ENCODE measurements at regions of chr1 and their contacts with region 1.

Region 1: DNA sequence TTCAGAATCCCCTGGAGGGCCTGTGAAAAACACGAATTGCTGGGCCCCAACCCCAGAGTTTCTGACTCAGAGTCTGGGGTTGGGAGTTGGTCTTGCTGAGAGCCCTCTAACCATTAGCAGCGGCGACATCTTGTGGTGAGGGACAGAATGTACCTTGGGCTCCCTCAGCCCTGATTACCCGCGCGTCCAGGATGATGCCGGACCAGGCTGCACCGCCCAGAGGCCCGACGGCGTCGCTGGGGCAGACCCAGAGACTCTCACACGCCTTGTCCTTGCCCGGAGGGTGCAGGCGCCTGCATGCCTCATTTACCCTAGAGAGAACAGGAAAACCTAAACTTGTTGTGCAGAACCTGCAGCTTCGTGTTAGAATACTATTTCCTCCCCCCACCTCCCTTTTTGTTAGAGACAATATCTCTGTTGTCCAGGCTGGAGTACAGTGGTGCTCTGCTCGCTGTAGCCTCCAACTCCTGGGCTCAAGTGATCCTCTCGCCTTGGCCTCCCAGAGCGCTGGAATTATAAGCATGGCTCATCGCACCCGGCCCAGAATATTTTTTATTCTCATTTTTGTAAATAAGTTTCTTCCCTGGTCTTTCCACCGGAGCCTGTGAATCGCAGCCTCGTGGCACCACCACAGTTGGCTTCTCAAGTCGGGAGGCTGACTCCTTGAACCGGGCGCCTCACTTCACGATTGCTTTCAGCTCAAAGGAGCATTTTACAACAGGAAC is 22.2 kb upstream of the RD3 start:
- DNase-seq: peak; percentile 26 to 79 (median 67)
- ATAC-seq: peak; percentile 65
- H3K4me3 ChIP-seq: no peak overlapping the region
- H3K4me3 Mint-ChIP-seq: peak overlapping the region; percentile 69
- H3K27ac ChIP-seq: no peak overlapping the region
- H3K27ac Mint-ChIP-seq: no peak overlapping the region
- H3K4me1 ChIP-seq: peaks cover 20% of the 10 kb centered on the region
- H3K4me1 Mint-ChIP-seq: peaks cover 17% of the 10 kb centered on the region
- H3K27me3 ChIP-seq: peaks cover 0 to 2% of the 10 kb centered on the region in 2 experiments
- H3K27me3 Mint-ChIP-seq: no peaks in the 10 kb centered on the region
- CTCF ChIP-seq: no peak

Region 2: DNA sequence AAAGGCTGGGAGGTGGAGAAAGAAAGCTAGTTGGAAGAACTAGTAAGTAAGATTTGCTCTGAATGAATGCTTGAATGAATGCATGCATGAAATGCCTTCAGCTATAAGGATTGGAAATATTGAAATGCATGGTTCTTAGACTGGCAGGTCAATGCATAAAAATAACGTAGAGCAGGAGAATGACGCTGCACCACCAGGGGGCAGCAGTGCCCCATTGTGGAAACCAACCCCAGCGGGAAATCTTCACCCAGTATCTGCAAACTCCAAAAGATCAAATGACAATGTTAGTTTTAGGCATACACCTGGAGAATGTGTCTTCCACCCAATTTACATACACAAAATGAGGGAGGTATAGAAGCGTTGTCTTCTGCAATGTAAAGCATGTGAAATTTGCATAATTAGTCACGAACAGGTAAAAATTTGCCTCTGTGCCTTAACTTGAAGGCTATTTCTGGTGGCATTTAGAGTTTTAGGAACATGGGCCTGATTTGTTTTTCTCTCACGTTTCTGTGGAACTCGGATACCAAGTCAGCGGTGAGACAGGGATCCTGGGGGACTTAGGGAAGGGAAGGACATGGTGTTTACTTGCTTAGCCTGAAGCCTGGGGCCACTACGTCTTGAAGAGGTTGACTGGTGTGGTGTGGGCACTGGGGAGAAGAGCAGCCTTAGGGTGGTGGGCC is 1106.8 kb before region 1 on chr1:
- CTCF ChIA-PET with region 1: no interaction called
- POLR2A ChIA-PET with region 1: no interaction called
- intact Hi-C with region 1: loop called (anchors 2 kb)
- DNase-seq: peak; percentile 33 to 85 (median 70)
- ATAC-seq: peak; percentile 64
- H3K4me3 ChIP-seq: no peak overlapping the region
- H3K4me3 Mint-ChIP-seq: no peak overlapping the region
- H3K27ac ChIP-seq: no peak overlapping the region
- H3K27ac Mint-ChIP-seq: no peak overlapping the region
- H3K4me1 ChIP-seq: no peaks in the 10 kb centered on the region
- H3K4me1 Mint-ChIP-seq: peaks cover 3% of the 10 kb centered on the region
- H3K27me3 ChIP-seq: no peaks in the 10 kb centered on the region
- H3K27me3 Mint-ChIP-seq: no peaks in the 10 kb centered on the region
- CTCF ChIP-seq: peak; percentile 92

Region 3: DNA sequence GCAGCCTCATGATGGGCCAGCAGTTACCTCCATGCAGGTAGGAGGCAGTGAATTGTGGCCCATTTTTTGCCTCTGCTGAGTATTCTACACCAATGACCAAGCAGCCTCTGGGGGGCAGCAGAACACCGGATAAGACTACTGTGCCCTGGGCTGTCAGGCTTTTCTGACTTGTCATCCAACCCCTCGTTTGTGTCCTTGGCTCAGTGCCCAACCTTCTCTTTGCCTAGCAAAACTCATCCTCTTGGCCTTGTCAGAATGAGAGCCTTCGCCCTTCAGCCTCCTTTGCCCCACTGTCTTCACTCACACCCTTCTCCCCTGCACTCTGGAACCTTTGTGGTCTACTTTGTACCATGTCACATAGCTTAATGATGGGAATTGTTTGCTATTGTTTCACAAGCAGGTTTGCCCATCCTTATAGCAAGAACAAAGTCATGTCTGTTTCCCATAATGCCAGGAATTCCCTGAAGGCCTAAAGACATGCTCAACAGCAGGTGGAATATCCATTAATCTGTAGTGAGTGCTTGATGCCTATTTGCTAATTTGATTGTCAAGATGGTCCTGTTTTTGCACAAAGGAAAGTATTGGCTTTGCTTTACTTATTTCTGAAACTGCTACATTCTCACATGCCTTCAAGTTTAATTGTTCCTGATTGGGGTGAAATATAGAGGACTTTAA is 929.6 kb before region 1 on chr1:
- CTCF ChIA-PET with region 1: no interaction called
- POLR2A ChIA-PET with region 1: no interaction called
- intact Hi-C with region 1: loop called in 1 of 2 experiments (anchors 2 kb)
- DNase-seq: peak; percentile 37 to 72 (median 63)
- ATAC-seq: no peak
- H3K4me3 ChIP-seq: no peak overlapping the region
- H3K4me3 Mint-ChIP-seq: no peak overlapping the region
- H3K27ac ChIP-seq: no peak overlapping the region
- H3K27ac Mint-ChIP-seq: no peak overlapping the region
- H3K4me1 ChIP-seq: peaks cover 4% of the 10 kb centered on the region
- H3K4me1 Mint-ChIP-seq: peaks cover 15% of the 10 kb centered on the region
- H3K27me3 ChIP-seq: no peaks in the 10 kb centered on the region
- H3K27me3 Mint-ChIP-seq: no peaks in the 10 kb centered on the region
- CTCF ChIP-seq: peak; percentile 41

Region 4: GRCh38 chr1:211492511-211493132 is 21.6 kb before region 1 on chr1:
- CTCF ChIA-PET with region 1: interaction called, 10 read pairs
- POLR2A ChIA-PET with region 1: no interaction called
- intact Hi-C with region 1: no loop called
- DNase-seq: no peak
- ATAC-seq: no peak
- H3K4me3 ChIP-seq: no peak overlapping the region
- H3K4me3 Mint-ChIP-seq: no peak overlapping the region
- H3K27ac ChIP-seq: no peak overlapping the region
- H3K27ac Mint-ChIP-seq: no peak overlapping the region
- H3K4me1 ChIP-seq: no peaks in the 10 kb centered on the region
- H3K4me1 Mint-ChIP-seq: no peaks in the 10 kb centered on the region
- H3K27me3 ChIP-seq: no peaks in the 10 kb centered on the region
- H3K27me3 Mint-ChIP-seq: no peaks in the 10 kb centered on the region
- CTCF ChIP-seq: no peak

Region 5: GRCh38 chr1:211551628-211552460 is 37.7 kb after region 1 on chr1:
- CTCF ChIA-PET with region 1: no interaction called
- POLR2A ChIA-PET with region 1: no interaction called
- intact Hi-C with region 1: no loop called
- DNase-seq: peak in 1 of 9 experiments; percentile 25
- ATAC-seq: no peak
- H3K4me3 ChIP-seq: no peak overlapping the region
- H3K4me3 Mint-ChIP-seq: no peak overlapping the region
- H3K27ac ChIP-seq: no peak overlapping the region
- H3K27ac Mint-ChIP-seq: no peak overlapping the region
- H3K4me1 ChIP-seq: no peaks in the 10 kb centered on the region
- H3K4me1 Mint-ChIP-seq: no peaks in the 10 kb centered on the region
- H3K27me3 ChIP-seq: no peaks in the 10 kb centered on the region
- H3K27me3 Mint-ChIP-seq: no peaks in the 10 kb centered on the region
- CTCF ChIP-seq: no peak

Region 6: GRCh38 chr1:211625040-211625439 is 110.8 kb after region 1 on chr1:
- CTCF ChIA-PET with region 1: interaction called, 6 read pairs
- POLR2A ChIA-PET with region 1: no interaction called
- intact Hi-C with region 1: loop called in 1 of 2 experiments (anchors 1 kb)
- DNase-seq: peak in 5 of 9 experiments; percentile 32 to 74 (median 44)
- ATAC-seq: peak; percentile 71
- H3K4me3 ChIP-seq: no peak overlapping the region
- H3K4me3 Mint-ChIP-seq: no peak overlapping the region
- H3K27ac ChIP-seq: no peak overlapping the region
- H3K27ac Mint-ChIP-seq: no peak overlapping the region
- H3K4me1 ChIP-seq: no peaks in the 10 kb centered on the region
- H3K4me1 Mint-ChIP-seq: peaks cover 5% of the 10 kb centered on the region
- H3K27me3 ChIP-seq: no peaks in the 10 kb centered on the region
- H3K27me3 Mint-ChIP-seq: no peaks in the 10 kb centered on the region
- CTCF ChIP-seq: no peak

Region 7: GRCh38 chr1:211800925-211801607 is 286.9 kb after region 1 on chr1:
- CTCF ChIA-PET with region 1: no interaction called
- POLR2A ChIA-PET with region 1: no interaction called
- intact Hi-C with region 1: no loop called
- DNase-seq: no peak
- ATAC-seq: no peak
- H3K4me3 ChIP-seq: no peak overlapping the region
- H3K4me3 Mint-ChIP-seq: no peak overlapping the region
- H3K27ac ChIP-seq: no peak overlapping the region
- H3K27ac Mint-ChIP-seq: no peak overlapping the region
- H3K4me1 ChIP-seq: no peaks in the 10 kb centered on the region
- H3K4me1 Mint-ChIP-seq: peaks cover 6% of the 10 kb centered on the region
- H3K27me3 ChIP-seq: no peaks in the 10 kb centered on the region
- H3K27me3 Mint-ChIP-seq: no peaks in the 10 kb centered on the region
- CTCF ChIP-seq: no peak